ENCODE measurements at regions of chr10 and their contacts with region 1.

Region 1: DNA sequence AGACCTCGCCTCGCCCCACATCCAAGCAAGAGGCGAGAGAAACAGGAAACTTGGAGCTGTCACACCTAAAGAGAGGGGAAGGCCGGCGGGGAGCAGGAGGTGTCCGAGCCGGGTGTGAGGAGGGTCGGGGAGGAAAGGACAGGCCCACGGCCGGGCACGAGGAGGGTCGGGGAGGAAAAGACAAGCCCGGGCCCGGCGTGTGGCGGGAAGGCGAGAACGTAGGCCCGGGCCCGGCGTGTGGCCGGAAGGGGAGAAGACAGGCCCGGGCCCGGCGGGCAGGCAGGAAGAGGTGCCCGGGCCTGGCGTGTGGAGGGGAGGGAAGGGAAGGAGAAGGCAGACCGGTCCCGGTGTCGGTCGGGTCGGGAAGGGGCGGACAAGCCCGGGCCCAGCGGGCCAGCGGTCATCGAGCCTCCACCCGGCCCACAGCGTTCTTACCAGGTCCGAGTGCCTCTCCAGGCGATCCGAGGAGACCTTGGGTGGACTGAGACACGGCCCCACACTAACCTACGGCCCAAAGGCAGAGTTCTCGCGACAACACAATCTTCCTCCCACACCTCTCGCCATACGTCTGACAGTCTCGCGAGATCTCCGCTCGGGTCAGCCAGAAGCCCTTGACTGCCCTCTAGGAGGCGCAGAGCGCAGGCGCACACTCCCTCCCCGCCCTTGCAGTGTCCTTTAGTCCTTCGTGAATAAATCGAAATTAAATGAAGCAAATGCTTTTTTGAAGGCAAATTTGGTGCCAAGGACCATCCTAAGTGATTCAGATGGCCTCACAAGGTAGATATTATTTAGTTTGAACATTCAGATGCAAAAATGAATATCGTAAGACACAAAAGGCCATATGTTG is at the start of gene NCOA4:
- DNase-seq: peak; percentile 97
- H3K4me3 Mint-ChIP-seq: peak within 1 kb of the TSS; percentile 97
- H3K27ac Mint-ChIP-seq: peak within 1 kb of the TSS; percentile 99
- H3K4me1 Mint-ChIP-seq: peaks cover 23% of the 10 kb centered on the region
- H3K27me3 Mint-ChIP-seq: no peaks in the 10 kb centered on the region
- CTCF ChIP-seq: peak; percentile 52
- total RNA-seq, gene NCOA4: 73.5 and 81.6 TPM in 2 replicates

Region 2: DNA sequence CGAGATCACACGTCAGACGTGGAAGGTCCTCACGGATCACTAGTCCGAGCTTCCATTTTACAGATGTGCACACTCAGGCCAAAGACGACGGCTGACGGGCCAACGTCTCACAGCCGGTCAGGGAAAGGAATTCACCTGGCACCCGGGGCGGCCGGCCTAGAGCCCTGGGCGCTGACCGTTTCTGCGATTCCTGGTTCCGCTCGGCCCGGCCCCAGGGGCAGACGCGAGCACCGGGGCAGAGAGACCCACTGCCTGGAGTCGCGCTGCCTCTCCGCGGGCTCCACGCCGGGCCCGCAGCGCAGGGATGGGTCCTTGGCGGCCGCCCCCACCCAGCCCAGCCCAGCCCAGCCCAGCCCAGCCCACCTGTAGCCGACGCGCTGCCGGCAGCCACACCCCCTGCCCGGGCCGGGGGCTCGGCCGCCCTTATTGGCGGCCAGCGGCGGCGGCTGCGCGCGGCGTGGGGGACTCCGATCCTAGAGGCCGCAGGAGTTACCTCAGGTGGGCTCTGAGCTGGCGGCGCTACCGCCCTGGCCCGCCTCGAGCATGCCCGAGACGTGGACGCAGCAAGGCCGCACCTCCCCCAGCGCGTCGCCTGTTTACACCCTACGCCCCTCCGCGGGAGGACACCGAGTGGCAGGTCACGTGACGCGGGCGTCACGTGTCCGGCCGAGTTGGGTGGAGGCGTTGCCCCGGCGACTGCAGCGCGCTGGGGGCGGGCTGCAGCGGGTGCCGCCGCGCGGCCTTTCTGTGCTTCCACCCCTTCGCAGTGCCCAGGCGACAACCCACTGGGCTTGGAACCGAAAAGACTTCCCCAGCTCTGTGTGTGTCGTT is 435.8 kb before region 1 on chr10:
- CTCF ChIA-PET with region 1: no interaction called
- POLR2A ChIA-PET with region 1: no interaction called
- intact Hi-C with region 1: loop called (anchors 10 kb)
- DNase-seq: peak; percentile 89
- H3K4me3 Mint-ChIP-seq: peak overlapping the region; percentile 86
- H3K27ac Mint-ChIP-seq: peak overlapping the region; percentile 77
- H3K4me1 Mint-ChIP-seq: peaks cover 21% of the 10 kb centered on the region
- H3K27me3 Mint-ChIP-seq: no peaks in the 10 kb centered on the region
- CTCF ChIP-seq: no peak

Region 3: GRCh38 chr10:45672181-45673073 is 357.9 kb before region 1 on chr10 and contains the start of gene ZFAND4:
- CTCF ChIA-PET with region 1: no interaction called
- POLR2A ChIA-PET with region 1: no interaction called
- intact Hi-C with region 1: loop called (anchors 5 kb)
- DNase-seq: peak; percentile 94
- H3K4me3 Mint-ChIP-seq: peak within 1 kb of the TSS; percentile 81
- H3K27ac Mint-ChIP-seq: peak within 1 kb of the TSS; percentile 70
- H3K4me1 Mint-ChIP-seq: no peaks in the 10 kb centered on the region
- H3K27me3 Mint-ChIP-seq: no peaks in the 10 kb centered on the region
- CTCF ChIP-seq: peak; percentile 55
- total RNA-seq, gene ZFAND4: 4.9 and 5.0 TPM in 2 replicates

Region 4: DNA sequence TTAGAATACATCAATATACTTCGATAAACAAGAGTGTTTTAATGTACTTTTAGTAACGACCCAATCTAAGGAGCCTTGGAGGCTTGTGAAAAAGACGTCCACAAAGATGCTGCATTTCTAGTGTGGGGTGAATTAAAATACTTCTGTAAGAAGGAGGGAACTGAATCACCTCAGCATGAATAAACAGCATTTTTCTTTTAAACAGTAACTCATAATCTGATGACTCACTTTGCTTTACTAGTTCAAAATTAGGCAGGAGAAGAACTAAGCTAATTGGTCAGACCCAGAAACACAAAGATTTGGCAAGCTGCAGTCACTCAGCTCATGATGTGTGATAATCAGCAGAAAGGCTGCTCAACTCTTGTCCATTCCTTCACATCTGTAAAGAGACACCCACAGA is 24.1 kb before region 1 on chr10:
- CTCF ChIA-PET with region 1: interaction called, 43 read pairs
- POLR2A ChIA-PET with region 1: interaction called, 4 read pairs
- intact Hi-C with region 1: no loop called
- DNase-seq: peak; percentile 62
- H3K4me3 Mint-ChIP-seq: no peak overlapping the region
- H3K27ac Mint-ChIP-seq: peak overlapping the region; percentile 51
- H3K4me1 Mint-ChIP-seq: peaks cover 10% of the 10 kb centered on the region
- H3K27me3 Mint-ChIP-seq: no peaks in the 10 kb centered on the region
- CTCF ChIP-seq: no peak

Region 5: GRCh38 chr10:46014683-46015405 is 15.5 kb before region 1 on chr10:
- CTCF ChIA-PET with region 1: interaction called, 43 read pairs
- POLR2A ChIA-PET with region 1: interaction called, 13 read pairs
- intact Hi-C with region 1: no loop called
- DNase-seq: no peak
- H3K4me3 Mint-ChIP-seq: no peak overlapping the region
- H3K27ac Mint-ChIP-seq: no peak overlapping the region
- H3K4me1 Mint-ChIP-seq: peaks cover 11% of the 10 kb centered on the region
- H3K27me3 Mint-ChIP-seq: no peaks in the 10 kb centered on the region
- CTCF ChIP-seq: no peak

Region 6: DNA sequence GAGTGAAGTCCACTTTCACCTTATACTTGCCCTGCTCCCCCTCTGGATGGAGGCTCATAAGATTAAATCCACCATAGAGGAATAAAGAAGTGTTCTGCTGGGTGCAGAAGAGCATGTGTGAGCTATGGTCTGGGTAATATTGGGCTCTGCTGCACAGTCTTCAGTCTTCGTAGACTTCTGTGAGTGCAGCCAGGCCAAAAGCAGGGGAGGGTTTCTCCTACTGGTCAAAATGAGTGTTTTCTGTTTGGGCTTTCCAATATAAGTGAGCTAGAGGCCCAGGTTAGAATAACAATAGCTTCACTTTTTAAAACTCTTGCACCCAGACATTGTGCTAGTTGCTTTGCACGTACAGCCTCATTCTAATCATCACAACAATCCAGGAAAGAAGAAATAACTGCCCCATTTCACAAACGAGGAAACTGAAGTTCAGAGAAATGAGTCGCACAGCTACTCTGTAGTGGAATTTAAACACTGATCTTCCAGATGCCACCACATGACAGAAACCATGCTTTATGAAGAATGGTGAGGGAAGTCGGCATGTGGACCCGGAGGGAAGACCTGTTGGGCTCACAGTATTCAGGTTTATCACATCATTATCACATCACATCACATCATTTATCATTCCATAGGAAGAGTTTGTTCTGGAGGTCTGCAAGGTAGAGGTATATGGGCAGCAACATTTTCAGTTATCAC is 39.6 kb after region 1 on chr10:
- CTCF ChIA-PET with region 1: no interaction called
- POLR2A ChIA-PET with region 1: no interaction called
- intact Hi-C with region 1: no loop called
- DNase-seq: no peak
- H3K4me3 Mint-ChIP-seq: no peak overlapping the region
- H3K27ac Mint-ChIP-seq: no peak overlapping the region
- H3K4me1 Mint-ChIP-seq: no peaks in the 10 kb centered on the region
- H3K27me3 Mint-ChIP-seq: no peaks in the 10 kb centered on the region
- CTCF ChIP-seq: no peak

Measured in MCF 10A (cell line).